Tibial artery (tissue), 4 donors: ENCODE measurements at regions of chr10 and their contacts with region 1.

Region 1: DNA sequence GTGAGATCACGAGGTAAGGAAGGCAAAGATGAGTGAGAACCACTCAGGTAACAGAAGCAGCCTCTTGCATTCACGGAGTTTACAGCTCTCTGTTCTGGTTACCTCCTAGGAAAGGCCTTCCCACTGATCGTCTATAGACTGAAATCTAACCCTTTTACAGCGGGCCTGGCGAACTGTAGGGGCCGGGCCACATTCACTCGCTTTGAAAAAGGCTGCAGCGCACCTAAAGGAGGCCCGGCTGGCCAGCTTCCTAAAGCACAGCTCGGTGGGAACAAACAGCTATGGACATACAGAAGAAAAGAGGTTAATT is 566 bp downstream of the ATP5MK start:
- DNase-seq: no peak
- H3K4me3 ChIP-seq: peak overlapping the region; percentile 87 to 90
- H3K27ac ChIP-seq: peak overlapping the region; percentile 81 to 88
- H3K4me1 ChIP-seq: peaks cover 0 to 37% (median 28%) of the 10 kb centered on the region in 4 donors
- H3K27me3 ChIP-seq: no peaks in the 10 kb centered on the region
- CTCF ChIP-seq: no peak

Region 2: GRCh38 chr10:103367782-103368518 is 27.8 kb before region 1 on chr10 and contains the start of gene TAF5:
- intact Hi-C with region 1: loop called (anchors 2 kb)
- DNase-seq: peak; percentile 89 to 94
- H3K4me3 ChIP-seq: peak within 1 kb of the TSS; percentile 68 to 98
- H3K27ac ChIP-seq: peak within 1 kb of the TSS; percentile 80 to 94
- H3K4me1 ChIP-seq: peaks cover 0 to 20% (median 15%) of the 10 kb centered on the region in 4 donors
- H3K27me3 ChIP-seq: no peaks in the 10 kb centered on the region
- CTCF ChIP-seq: peak in 1 of 2 experiments; percentile 19